CD4-positive, alpha-beta T cell (primary cell): ENCODE measurements at regions of chr2 and their contacts with region 1.

Region 1: GRCh38 chr2:101697124-101698013 is at the start of gene MAP4K4:
- DNase-seq: peak; percentile 63 to 90 (median 81)
- ATAC-seq: peak; percentile 64
- H3K4me3 ChIP-seq: peak within 1 kb of the TSS; percentile 84
- H3K4me3 Mint-ChIP-seq: peak within 1 kb of the TSS; percentile 98
- H3K27ac ChIP-seq: peak within 1 kb of the TSS; percentile 68 to 86
- H3K27ac Mint-ChIP-seq: peak within 1 kb of the TSS; percentile 93
- H3K4me1 ChIP-seq: peaks cover 31% of the 10 kb centered on the region
- H3K4me1 Mint-ChIP-seq: peaks cover 25% of the 10 kb centered on the region
- H3K27me3 ChIP-seq: no peaks in the 10 kb centered on the region
- H3K27me3 Mint-ChIP-seq: no peaks in the 10 kb centered on the region
- CTCF ChIP-seq: no peak
- total RNA-seq, gene MAP4K4: 92.8 to 94.0 TPM

Region 2: DNA sequence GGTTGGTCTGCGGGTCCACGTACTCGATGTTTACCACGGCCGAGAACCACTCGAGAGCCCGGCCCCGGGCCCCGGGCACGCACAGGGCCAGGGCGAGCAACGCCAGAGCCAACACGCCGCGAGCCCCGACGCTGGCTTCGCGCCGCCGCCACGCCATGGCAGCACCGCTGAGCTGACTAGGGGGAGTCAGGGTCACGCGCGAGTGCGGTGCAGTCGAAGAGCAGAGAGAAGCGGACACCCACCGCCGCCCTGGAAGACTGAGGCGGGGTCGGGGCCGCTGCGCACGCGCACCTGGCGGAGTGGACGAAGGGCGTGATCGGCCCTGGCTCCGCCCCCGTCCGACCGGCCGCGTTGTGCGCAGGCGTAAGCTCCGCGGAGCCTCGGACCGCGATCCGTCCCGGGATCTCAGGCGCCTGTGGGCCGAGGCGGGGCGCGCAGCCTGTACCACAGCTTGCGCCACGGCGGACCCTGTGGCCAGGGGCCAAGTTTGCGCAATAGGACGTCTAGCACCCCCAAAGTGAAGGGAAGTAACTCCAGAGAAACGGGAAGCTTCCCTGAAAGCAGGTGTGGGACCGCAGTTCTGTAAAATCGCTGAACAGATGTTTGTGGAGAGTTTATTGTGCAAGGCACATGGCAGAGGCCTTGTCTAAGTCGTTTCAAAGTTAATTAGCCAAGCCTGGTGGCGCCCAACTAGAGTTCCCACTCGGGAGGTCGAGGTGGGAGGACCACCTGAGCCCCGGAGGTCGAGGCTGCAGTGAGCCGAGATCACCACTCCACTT is 388.7 kb before region 1 on chr2 and contains the start of gene RNF149:
- CTCF ChIA-PET with region 1: interaction called, 3 read pairs
- POLR2A ChIA-PET with region 1: interaction called, 6 read pairs
- intact Hi-C with region 1: loop called in 1 of 2 experiments (anchors 5 kb)
- DNase-seq: peak; percentile 82 to 95 (median 93)
- ATAC-seq: peak; percentile 56
- H3K4me3 ChIP-seq: peak within 1 kb of the TSS; percentile 90
- H3K4me3 Mint-ChIP-seq: peak within 1 kb of the TSS; percentile 98
- H3K27ac ChIP-seq: peak within 1 kb of the TSS; percentile 85 to 95
- H3K27ac Mint-ChIP-seq: peak within 1 kb of the TSS; percentile 96
- H3K4me1 ChIP-seq: peaks cover 67% of the 10 kb centered on the region
- H3K4me1 Mint-ChIP-seq: peaks cover 79% of the 10 kb centered on the region
- H3K27me3 ChIP-seq: no peaks in the 10 kb centered on the region
- H3K27me3 Mint-ChIP-seq: no peaks in the 10 kb centered on the region
- CTCF ChIP-seq: no peak
- total RNA-seq, gene RNF149: 139 to 150 TPM

Region 3: GRCh38 chr2:101655702-101656422 is 41.5 kb before region 1 on chr2:
- CTCF ChIA-PET with region 1: interaction called, 7 read pairs
- POLR2A ChIA-PET with region 1: no interaction called
- intact Hi-C with region 1: loop called (anchors 5 kb)
- DNase-seq: no peak
- ATAC-seq: no peak
- H3K4me3 ChIP-seq: no peak overlapping the region
- H3K4me3 Mint-ChIP-seq: no peak overlapping the region
- H3K27ac ChIP-seq: no peak overlapping the region
- H3K27ac Mint-ChIP-seq: no peak overlapping the region
- H3K4me1 ChIP-seq: peaks cover 17% of the 10 kb centered on the region
- H3K4me1 Mint-ChIP-seq: peaks cover 8% of the 10 kb centered on the region
- H3K27me3 ChIP-seq: no peaks in the 10 kb centered on the region
- H3K27me3 Mint-ChIP-seq: no peaks in the 10 kb centered on the region
- CTCF ChIP-seq: no peak

Region 4: DNA sequence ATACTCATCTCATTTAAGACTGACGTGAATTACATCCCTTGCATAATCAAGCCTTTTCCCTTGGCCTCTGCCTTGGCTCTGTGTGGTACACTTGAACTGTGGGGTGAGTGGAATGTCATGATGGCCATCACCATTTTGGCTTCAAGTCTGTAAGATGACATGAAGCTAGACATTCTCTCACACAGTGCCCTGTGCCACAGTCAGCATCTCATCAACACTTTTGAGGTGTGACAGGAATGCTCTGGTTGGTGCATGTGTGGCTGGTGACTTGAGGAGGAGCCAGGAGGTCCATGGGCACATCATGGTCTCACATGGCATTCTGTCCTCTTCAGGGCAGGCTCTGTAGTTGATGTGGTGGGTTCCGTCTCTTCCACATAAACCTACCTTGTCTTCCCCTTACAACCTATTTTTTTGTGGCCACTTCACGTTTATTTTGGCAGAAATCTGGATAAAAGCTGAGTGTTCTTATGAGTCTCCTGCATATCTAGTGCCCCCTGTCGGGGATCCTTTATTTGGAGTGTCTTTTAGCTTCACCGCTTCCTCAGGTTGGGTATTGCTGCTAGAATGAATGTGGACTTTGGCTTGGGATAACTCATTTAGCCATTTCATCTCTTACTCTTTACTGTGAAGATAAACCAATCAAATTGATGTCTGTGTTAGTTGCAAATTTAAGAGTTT is 28.3 kb after region 1 on chr2:
- CTCF ChIA-PET with region 1: interaction called, 13 read pairs
- POLR2A ChIA-PET with region 1: interaction called, 7 read pairs
- intact Hi-C with region 1: loop called in 1 of 2 experiments (anchors 5 kb)
- DNase-seq: peak in 4 of 14 experiments; percentile 47 to 65 (median 58)
- ATAC-seq: no peak
- H3K4me3 ChIP-seq: no peak overlapping the region
- H3K4me3 Mint-ChIP-seq: peak overlapping the region; percentile 16
- H3K27ac ChIP-seq: no peak overlapping the region
- H3K27ac Mint-ChIP-seq: peak overlapping the region; percentile 50
- H3K4me1 ChIP-seq: peaks cover 57% of the 10 kb centered on the region
- H3K4me1 Mint-ChIP-seq: peaks cover 96% of the 10 kb centered on the region
- H3K27me3 ChIP-seq: no peaks in the 10 kb centered on the region
- H3K27me3 Mint-ChIP-seq: no peaks in the 10 kb centered on the region
- CTCF ChIP-seq: no peak

Region 5: DNA sequence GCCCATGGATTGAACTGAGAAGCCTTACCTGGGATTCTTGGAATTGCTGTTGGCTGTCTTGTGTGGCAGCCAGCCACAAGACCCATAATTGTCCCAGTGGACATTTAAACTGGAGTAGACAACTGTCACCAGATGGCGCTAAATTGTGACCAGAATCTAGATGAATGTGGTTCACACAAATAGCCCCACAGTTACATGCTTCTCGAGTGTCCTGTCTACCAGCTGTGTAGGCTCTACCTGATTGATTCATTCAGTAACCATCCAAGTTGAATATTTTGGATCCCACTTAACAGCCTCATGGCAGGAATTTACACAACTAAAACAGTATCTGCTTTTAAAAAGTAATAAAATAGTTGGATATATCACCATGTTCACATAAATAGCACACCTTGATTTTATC is 73.4 kb after region 1 on chr2:
- CTCF ChIA-PET with region 1: no interaction called
- POLR2A ChIA-PET with region 1: interaction called, 8 read pairs
- intact Hi-C with region 1: loop called (anchors 5 kb)
- DNase-seq: peak in 3 of 14 experiments; percentile 20 to 49 (median 45)
- ATAC-seq: no peak
- H3K4me3 ChIP-seq: no peak overlapping the region
- H3K4me3 Mint-ChIP-seq: peak overlapping the region; percentile 59
- H3K27ac ChIP-seq: no peak overlapping the region
- H3K27ac Mint-ChIP-seq: peak overlapping the region; percentile 81
- H3K4me1 ChIP-seq: peaks cover 62% of the 10 kb centered on the region
- H3K4me1 Mint-ChIP-seq: peaks cover 95% of the 10 kb centered on the region
- H3K27me3 ChIP-seq: no peaks in the 10 kb centered on the region
- H3K27me3 Mint-ChIP-seq: no peaks in the 10 kb centered on the region
- CTCF ChIP-seq: no peak

Region 6: DNA sequence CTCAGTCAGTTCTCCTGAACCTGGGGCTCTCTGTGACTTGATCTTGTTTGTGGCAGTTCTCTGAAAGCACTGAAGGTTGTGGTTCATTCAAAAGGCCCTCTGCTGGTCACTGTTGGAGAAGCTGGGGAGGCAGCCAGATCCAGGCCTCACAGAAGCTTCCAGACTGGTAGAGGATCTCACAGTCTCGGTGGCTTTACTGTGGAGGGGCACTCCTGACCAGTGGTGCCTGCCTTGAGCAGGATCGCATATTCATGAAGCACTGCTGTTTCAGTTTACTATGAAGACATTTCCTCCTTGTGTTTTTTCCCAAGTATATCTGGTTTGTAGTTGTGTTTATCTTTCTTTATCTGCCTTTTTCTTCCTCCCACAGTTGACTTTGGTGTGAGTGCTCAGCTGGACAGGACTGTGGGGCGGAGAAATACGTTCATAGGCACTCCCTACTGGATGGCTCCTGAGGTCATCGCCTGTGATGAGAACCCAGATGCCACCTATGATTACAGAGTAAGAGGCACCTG is 134.0 kb after region 1 on chr2:
- CTCF ChIA-PET with region 1: interaction called, 3 read pairs
- POLR2A ChIA-PET with region 1: interaction called, 11 read pairs
- intact Hi-C with region 1: no loop called
- DNase-seq: peak; percentile 40 to 78 (median 52)
- ATAC-seq: peak; percentile 62
- H3K4me3 ChIP-seq: no peak overlapping the region
- H3K4me3 Mint-ChIP-seq: peak overlapping the region; percentile 40
- H3K27ac ChIP-seq: no peak overlapping the region
- H3K27ac Mint-ChIP-seq: peak overlapping the region; percentile 44
- H3K4me1 ChIP-seq: peaks cover 41% of the 10 kb centered on the region
- H3K4me1 Mint-ChIP-seq: peaks cover 53% of the 10 kb centered on the region
- H3K27me3 ChIP-seq: no peaks in the 10 kb centered on the region
- H3K27me3 Mint-ChIP-seq: no peaks in the 10 kb centered on the region
- CTCF ChIP-seq: peak; percentile 59